ENCODE measurements at regions of chr11 and their contacts with region 1.

Region 1: DNA sequence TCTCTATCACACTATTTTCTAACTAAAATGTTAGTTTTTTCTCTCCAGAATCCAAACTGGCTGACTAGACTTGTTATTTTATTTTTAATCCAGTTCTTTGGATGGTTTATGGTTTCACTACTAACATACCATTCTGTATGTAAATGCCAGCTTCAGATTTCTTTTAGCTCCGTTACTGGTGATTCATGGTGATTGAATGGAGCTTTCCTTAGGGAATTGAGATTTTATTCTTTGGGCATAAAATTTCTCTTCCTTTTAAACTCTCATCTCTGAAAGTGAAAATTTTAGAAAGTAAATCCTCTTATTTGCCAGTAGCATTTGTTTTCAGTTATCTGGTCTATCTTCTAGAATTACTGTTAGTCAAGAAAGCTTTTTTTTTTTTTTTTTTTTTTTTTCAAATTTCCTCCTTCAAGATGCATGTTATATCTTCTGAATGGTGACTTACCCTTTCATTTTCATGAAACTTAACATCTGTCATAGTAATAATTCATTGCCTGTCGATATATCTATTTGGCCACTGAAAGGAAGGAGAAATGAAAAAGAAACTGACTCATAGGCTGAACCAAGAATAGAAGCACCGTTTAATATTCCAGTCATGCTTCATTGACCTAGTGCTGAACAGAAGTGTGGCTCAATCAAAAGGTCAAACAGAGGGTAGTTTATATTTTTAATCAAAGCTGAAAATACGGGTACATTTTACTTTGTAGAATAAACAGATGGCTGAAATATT is 6.4 kb downstream of the ENDOD1 start:
- DNase-seq: no peak
- H3K4me3 Mint-ChIP-seq: no peak overlapping the region
- H3K27ac Mint-ChIP-seq: no peak overlapping the region
- H3K4me1 Mint-ChIP-seq: peaks cover 62% of the 10 kb centered on the region
- H3K27me3 Mint-ChIP-seq: no peaks in the 10 kb centered on the region

Region 2: GRCh38 chr11:95084509-95084908 is 11.5 kb before region 1 on chr11:
- CTCF ChIA-PET with region 1: interaction called, 12 read pairs
- POLR2A ChIA-PET with region 1: interaction called, 7 read pairs
- intact Hi-C with region 1: loop called (anchors 1 kb)
- DNase-seq: peak; percentile 79
- H3K4me3 Mint-ChIP-seq: no peak overlapping the region
- H3K27ac Mint-ChIP-seq: peak overlapping the region; percentile 77
- H3K4me1 Mint-ChIP-seq: peaks cover 45% of the 10 kb centered on the region
- H3K27me3 Mint-ChIP-seq: no peaks in the 10 kb centered on the region